ENCODE measurements at regions of chr5 and their contacts with region 1.

Region 1: DNA sequence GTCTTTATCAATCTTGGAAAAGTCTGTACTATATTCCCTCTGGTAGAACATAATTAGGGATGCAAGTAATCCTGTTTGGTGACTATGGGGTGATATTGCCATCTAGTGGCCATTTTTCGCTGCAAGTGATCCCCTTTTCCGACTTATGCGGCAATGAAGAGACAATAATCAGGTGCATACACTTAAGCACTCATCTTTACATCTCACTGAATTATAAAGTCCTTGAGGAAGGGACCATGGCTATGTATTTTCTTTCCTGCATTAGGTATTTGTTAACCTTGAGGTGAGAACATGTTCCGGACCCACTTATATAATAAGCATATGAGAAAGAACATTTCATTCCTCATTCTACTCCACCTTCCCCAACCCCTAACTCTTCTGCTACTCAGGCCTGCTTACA is 19.6 kb upstream of the LIX1 start:
- DNase-seq: peak; percentile 70 to 78
- H3K4me3 ChIP-seq: no peak overlapping the region
- H3K4me3 Mint-ChIP-seq: no peak overlapping the region
- H3K27ac Mint-ChIP-seq: no peak overlapping the region
- H3K4me1 ChIP-seq: peaks cover 14% of the 10 kb centered on the region
- H3K4me1 Mint-ChIP-seq: peaks cover 5% of the 10 kb centered on the region
- H3K27me3 ChIP-seq: no peaks in the 10 kb centered on the region
- H3K27me3 Mint-ChIP-seq: no peaks in the 10 kb centered on the region
- CTCF ChIP-seq: peak; percentile 85 to 89

Region 2: GRCh38 chr5:96868603-96869371 is 293.3 kb before region 1 on chr5:
- CTCF ChIA-PET with region 1: interaction called, 5 read pairs
- POLR2A ChIA-PET with region 1: no interaction called
- intact Hi-C with region 1: loop called (anchors 1 kb)
- DNase-seq: peak in 1 of 2 experiments; percentile 59
- H3K4me3 ChIP-seq: no peak overlapping the region
- H3K4me3 Mint-ChIP-seq: no peak overlapping the region
- H3K27ac Mint-ChIP-seq: no peak overlapping the region
- H3K4me1 ChIP-seq: peaks cover 4% of the 10 kb centered on the region; the same call in 1 of the 2 replicates
- H3K4me1 Mint-ChIP-seq: peaks cover 3% of the 10 kb centered on the region
- H3K27me3 ChIP-seq: no peaks in the 10 kb centered on the region
- H3K27me3 Mint-ChIP-seq: no peaks in the 10 kb centered on the region
- CTCF ChIP-seq: peak; percentile 91 to 96

Region 3: DNA sequence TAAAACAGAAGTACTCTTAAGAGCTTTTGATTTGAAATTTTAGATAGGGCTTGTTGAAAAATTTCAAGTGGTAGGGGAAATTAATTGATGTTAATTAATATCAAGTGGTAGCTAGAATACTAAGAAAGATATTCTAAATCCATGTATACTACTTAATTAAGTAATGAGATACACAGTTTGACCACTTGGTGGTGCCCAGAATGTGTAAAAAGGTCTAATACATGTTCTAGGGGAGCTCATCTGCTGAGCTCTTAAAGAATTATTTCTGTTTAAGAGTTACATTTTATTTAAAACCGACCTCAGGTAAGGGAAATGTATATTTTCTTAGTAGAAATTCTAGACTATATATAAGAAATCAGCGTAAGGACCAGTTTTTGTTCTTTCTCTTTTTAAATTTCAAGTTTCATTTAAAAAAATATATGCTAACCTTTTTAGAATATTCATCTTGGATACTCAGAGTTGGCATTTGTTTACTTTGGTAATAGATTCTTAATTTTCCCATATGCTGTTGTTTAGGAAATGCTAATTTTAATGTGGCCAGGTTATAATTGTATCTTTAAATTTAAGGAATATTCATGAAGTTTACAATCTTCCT is 164.7 kb before region 1 on chr5:
- CTCF ChIA-PET with region 1: interaction called, 3 read pairs
- POLR2A ChIA-PET with region 1: no interaction called
- intact Hi-C with region 1: loop called (anchors 1 kb)
- DNase-seq: peak in 1 of 2 experiments; percentile 32
- H3K4me3 ChIP-seq: no peak overlapping the region
- H3K4me3 Mint-ChIP-seq: no peak overlapping the region
- H3K27ac Mint-ChIP-seq: no peak overlapping the region
- H3K4me1 ChIP-seq: peaks cover 4% of the 10 kb centered on the region
- H3K4me1 Mint-ChIP-seq: peaks cover 18% of the 10 kb centered on the region
- H3K27me3 ChIP-seq: no peaks in the 10 kb centered on the region
- H3K27me3 Mint-ChIP-seq: no peaks in the 10 kb centered on the region
- CTCF ChIP-seq: peak; percentile 47 to 49

Region 4: GRCh38 chr5:97062046-97062445 is 100.0 kb before region 1 on chr5:
- CTCF ChIA-PET with region 1: no interaction called
- POLR2A ChIA-PET with region 1: no interaction called
- intact Hi-C with region 1: loop called (anchors 5 kb)
- DNase-seq: no peak
- H3K4me3 ChIP-seq: no peak overlapping the region
- H3K4me3 Mint-ChIP-seq: no peak overlapping the region
- H3K27ac Mint-ChIP-seq: no peak overlapping the region
- H3K4me1 ChIP-seq: no peaks in the 10 kb centered on the region
- H3K4me1 Mint-ChIP-seq: no peaks in the 10 kb centered on the region
- H3K27me3 ChIP-seq: no peaks in the 10 kb centered on the region
- H3K27me3 Mint-ChIP-seq: no peaks in the 10 kb centered on the region
- CTCF ChIP-seq: no peak

Region 5: GRCh38 chr5:97192580-97193358 is 30.7 kb after region 1 on chr5:
- CTCF ChIA-PET with region 1: no interaction called
- POLR2A ChIA-PET with region 1: no interaction called
- intact Hi-C with region 1: no loop called
- DNase-seq: no peak
- H3K4me3 ChIP-seq: no peak overlapping the region
- H3K4me3 Mint-ChIP-seq: no peak overlapping the region
- H3K27ac Mint-ChIP-seq: no peak overlapping the region
- H3K4me1 ChIP-seq: peaks cover 5% of the 10 kb centered on the region; the same call in 1 of the 2 replicates
- H3K4me1 Mint-ChIP-seq: no peaks in the 10 kb centered on the region
- H3K27me3 ChIP-seq: no peaks in the 10 kb centered on the region
- H3K27me3 Mint-ChIP-seq: no peaks in the 10 kb centered on the region
- CTCF ChIP-seq: no peak

Region 6: GRCh38 chr5:97943036-97943435 is 781.0 kb after region 1 on chr5:
- CTCF ChIA-PET with region 1: no interaction called
- POLR2A ChIA-PET with region 1: no interaction called
- intact Hi-C with region 1: no loop called
- DNase-seq: no peak
- H3K4me3 ChIP-seq: no peak overlapping the region
- H3K4me3 Mint-ChIP-seq: no peak overlapping the region
- H3K27ac Mint-ChIP-seq: no peak overlapping the region
- H3K4me1 ChIP-seq: no peaks in the 10 kb centered on the region
- H3K4me1 Mint-ChIP-seq: no peaks in the 10 kb centered on the region
- H3K27me3 ChIP-seq: no peaks in the 10 kb centered on the region
- H3K27me3 Mint-ChIP-seq: no peaks in the 10 kb centered on the region
- CTCF ChIP-seq: no peak

Measured in Caco-2 (cell line).